Panc1 (cell line): ENCODE measurements at regions of chr10 and their contacts with region 1.

Region 1: GRCh38 chr10:102503281-102504220 is at the start of gene SUFU:
- DNase-seq: peak; percentile 91
- ATAC-seq: peak; percentile 83
- H3K4me3 ChIP-seq: peak within 1 kb of the TSS; percentile 95 to 99
- H3K27ac ChIP-seq: peak within 1 kb of the TSS; percentile 90
- H3K4me1 ChIP-seq: peaks cover 20% of the 10 kb centered on the region
- H3K27me3 ChIP-seq: no peaks in the 10 kb centered on the region
- CTCF ChIP-seq: peak; percentile 98
- total RNA-seq, gene SUFU: 9.5 TPM

Region 2: GRCh38 chr10:102492344-102492939 is 11.1 kb before region 1 on chr10:
- CTCF ChIA-PET with region 1: interaction called, 10 read pairs
- POLR2A ChIA-PET with region 1: no interaction called
- in situ Hi-C with region 1: no loop called
- intact Hi-C with region 1: no loop called
- DNase-seq: no peak
- ATAC-seq: no peak
- H3K4me3 ChIP-seq: no peak overlapping the region
- H3K27ac ChIP-seq: no peak overlapping the region
- H3K4me1 ChIP-seq: 0 out of 2 replicates have a peak, but pooled peaks cover 2% of the 10 kb centered on the region
- H3K27me3 ChIP-seq: no peaks in the 10 kb centered on the region
- CTCF ChIP-seq: no peak

Region 3: GRCh38 chr10:102641880-102642735 is 138.6 kb after region 1 on chr10:
- CTCF ChIA-PET with region 1: interaction called, 4 read pairs
- POLR2A ChIA-PET with region 1: no interaction called
- in situ Hi-C with region 1: no loop called
- intact Hi-C with region 1: loop called (anchors 5 kb)
- DNase-seq: peak; percentile 87
- ATAC-seq: peak; percentile 79
- H3K4me3 ChIP-seq: peak overlapping the region; percentile 69 to 86
- H3K27ac ChIP-seq: peak overlapping the region; percentile 94
- H3K4me1 ChIP-seq: peaks cover 21% of the 10 kb centered on the region
- H3K27me3 ChIP-seq: no peaks in the 10 kb centered on the region
- CTCF ChIP-seq: no peak; the same call in 1 of the 2 replicates

Region 4: GRCh38 chr10:102713814-102714620 is 210.5 kb after region 1 on chr10 and contains the start of gene ARL3:
- CTCF ChIA-PET with region 1: interaction called, 10 read pairs
- POLR2A ChIA-PET with region 1: no interaction called
- in situ Hi-C with region 1: no loop called
- intact Hi-C with region 1: no loop called
- DNase-seq: peak; percentile 85
- ATAC-seq: peak; percentile 96
- H3K4me3 ChIP-seq: peak within 1 kb of the TSS; percentile 68 to 82
- H3K27ac ChIP-seq: peak within 1 kb of the TSS; percentile 93
- H3K4me1 ChIP-seq: peaks cover 37% of the 10 kb centered on the region
- H3K27me3 ChIP-seq: no peaks in the 10 kb centered on the region
- CTCF ChIP-seq: no peak; the same call in 1 of the 2 replicates
- total RNA-seq, gene ARL3: 20.7 TPM

Region 5: GRCh38 chr10:103025696-103026095 is 522.1 kb after region 1 on chr10:
- CTCF ChIA-PET with region 1: no interaction called
- POLR2A ChIA-PET with region 1: no interaction called
- in situ Hi-C with region 1: no loop called
- intact Hi-C with region 1: no loop called
- DNase-seq: no peak
- ATAC-seq: no peak
- H3K4me3 ChIP-seq: no peak overlapping the region
- H3K27ac ChIP-seq: no peak overlapping the region
- H3K4me1 ChIP-seq: peaks cover 11% of the 10 kb centered on the region; the same call in 1 of the 2 replicates
- H3K27me3 ChIP-seq: no peaks in the 10 kb centered on the region
- CTCF ChIP-seq: no peak